CD8-positive, alpha-beta T cell (primary cell): ENCODE measurements at regions of chr2 and their contacts with region 1.

Region 1: GRCh38 chr2:64644177-64645004 is 9.3 kb downstream of the SERTAD2 start:
- DNase-seq: peak in 7 of 9 experiments; percentile 45 to 80 (median 66)
- ATAC-seq: peak; percentile 74
- H3K4me3 ChIP-seq: peak overlapping the region; percentile 42 to 47
- H3K4me3 Mint-ChIP-seq: peak overlapping the region; percentile 89
- H3K27ac ChIP-seq: peak overlapping the region; percentile 50 to 82
- H3K27ac Mint-ChIP-seq: peak overlapping the region; percentile 93
- H3K4me1 ChIP-seq: peaks cover 71% of the 10 kb centered on the region
- H3K4me1 Mint-ChIP-seq: peaks cover 94% of the 10 kb centered on the region
- H3K27me3 ChIP-seq: no peaks in the 10 kb centered on the region
- H3K27me3 Mint-ChIP-seq: no peaks in the 10 kb centered on the region
- CTCF ChIP-seq: no peak

Region 2: DNA sequence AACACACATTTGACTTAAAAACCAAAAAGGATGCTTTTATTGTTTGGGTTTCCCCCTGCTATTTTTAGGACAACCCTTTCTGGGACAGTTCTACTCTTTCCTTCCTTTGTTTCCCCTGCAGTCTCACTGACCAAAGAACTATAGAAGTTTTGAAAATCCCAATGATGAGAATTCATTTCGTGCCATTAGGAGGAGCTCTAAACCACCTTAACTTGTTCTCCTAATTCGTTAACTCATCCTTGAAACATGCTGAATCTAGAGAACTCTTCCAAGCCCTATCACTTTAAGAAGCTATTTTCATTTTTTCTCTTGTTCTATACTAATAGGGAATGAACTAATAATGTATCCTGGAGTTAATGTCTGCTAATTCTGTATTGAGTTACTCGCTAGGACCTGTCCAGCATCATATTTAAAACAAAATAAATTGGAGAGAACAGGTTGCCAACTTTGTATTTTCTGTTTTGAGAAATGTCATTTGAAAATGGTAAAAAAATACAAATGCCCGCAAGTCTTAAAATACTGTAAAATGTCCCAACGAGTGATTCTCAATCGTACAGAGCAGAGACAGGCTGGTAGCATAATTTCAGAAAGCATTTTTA is 57.4 kb before region 1 on chr2:
- CTCF ChIA-PET with region 1: interaction called, 12 read pairs
- POLR2A ChIA-PET with region 1: interaction called, 3 read pairs
- intact Hi-C with region 1: loop called (anchors 2 kb)
- DNase-seq: peak in 2 of 9 experiments; percentile 57 to 70
- ATAC-seq: peak; percentile 75
- H3K4me3 ChIP-seq: no peak overlapping the region
- H3K4me3 Mint-ChIP-seq: no peak overlapping the region
- H3K27ac ChIP-seq: no peak overlapping the region
- H3K27ac Mint-ChIP-seq: no peak overlapping the region
- H3K4me1 ChIP-seq: no peaks in the 10 kb centered on the region
- H3K4me1 Mint-ChIP-seq: no peaks in the 10 kb centered on the region
- H3K27me3 ChIP-seq: no peaks in the 10 kb centered on the region
- H3K27me3 Mint-ChIP-seq: no peaks in the 10 kb centered on the region
- CTCF ChIP-seq: peak; percentile 87

Region 3: DNA sequence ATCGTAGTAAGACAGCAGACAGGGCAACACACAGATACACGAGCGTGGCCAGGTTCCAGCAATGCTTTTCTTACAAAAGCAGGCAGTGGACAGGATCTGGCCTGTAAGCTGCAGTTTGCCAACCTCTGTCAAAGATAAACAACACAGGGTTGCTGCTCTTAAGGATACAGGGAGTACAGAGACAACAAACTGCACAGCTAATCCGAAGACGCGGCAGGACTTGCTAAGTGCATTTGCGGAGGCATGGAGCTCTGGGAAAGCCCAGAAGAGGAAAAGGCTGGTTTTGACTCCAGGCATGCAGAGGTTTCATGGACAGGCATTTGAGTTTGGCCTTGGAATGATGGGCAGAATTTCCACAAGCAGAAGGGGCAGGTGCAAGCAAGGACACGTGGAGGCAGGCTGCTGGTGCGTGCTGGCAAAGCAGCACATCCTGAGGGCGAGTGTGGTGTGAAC is 15.0 kb before region 1 on chr2:
- CTCF ChIA-PET with region 1: interaction called, 92 read pairs
- POLR2A ChIA-PET with region 1: interaction called, 4 read pairs
- intact Hi-C with region 1: loop called in 1 of 2 experiments (anchors 1 kb)
- DNase-seq: no peak
- ATAC-seq: no peak
- H3K4me3 ChIP-seq: no peak overlapping the region
- H3K4me3 Mint-ChIP-seq: no peak overlapping the region
- H3K27ac ChIP-seq: no peak overlapping the region
- H3K27ac Mint-ChIP-seq: no peak overlapping the region
- H3K4me1 ChIP-seq: no peaks in the 10 kb centered on the region
- H3K4me1 Mint-ChIP-seq: peaks cover 9% of the 10 kb centered on the region
- H3K27me3 ChIP-seq: no peaks in the 10 kb centered on the region
- H3K27me3 Mint-ChIP-seq: no peaks in the 10 kb centered on the region
- CTCF ChIP-seq: no peak

Region 4: GRCh38 chr2:64698668-64699444 is 54.5 kb after region 1 on chr2:
- CTCF ChIA-PET with region 1: interaction called, 5 read pairs
- POLR2A ChIA-PET with region 1: interaction called, 3 read pairs
- intact Hi-C with region 1: loop called in 1 of 2 experiments (anchors 5 kb)
- DNase-seq: peak in 2 of 9 experiments; percentile 15 to 53
- ATAC-seq: peak; percentile 78
- H3K4me3 ChIP-seq: no peak overlapping the region
- H3K4me3 Mint-ChIP-seq: no peak overlapping the region
- H3K27ac ChIP-seq: no peak overlapping the region
- H3K27ac Mint-ChIP-seq: no peak overlapping the region
- H3K4me1 ChIP-seq: peaks cover 8% of the 10 kb centered on the region
- H3K4me1 Mint-ChIP-seq: peaks cover 37% of the 10 kb centered on the region
- H3K27me3 ChIP-seq: no peaks in the 10 kb centered on the region
- H3K27me3 Mint-ChIP-seq: no peaks in the 10 kb centered on the region
- CTCF ChIP-seq: no peak

Region 5: GRCh38 chr2:64767670-64768468 is 123.5 kb after region 1 on chr2:
- CTCF ChIA-PET with region 1: interaction called, 22 read pairs
- POLR2A ChIA-PET with region 1: interaction called, 9 read pairs
- intact Hi-C with region 1: loop called in 1 of 2 experiments (anchors 2 kb)
- DNase-seq: peak; percentile 45 to 90 (median 74)
- ATAC-seq: peak; percentile 74
- H3K4me3 ChIP-seq: peak overlapping the region; percentile 66 to 68
- H3K4me3 Mint-ChIP-seq: peak overlapping the region; percentile 92
- H3K27ac ChIP-seq: peak overlapping the region; percentile 61 to 88
- H3K27ac Mint-ChIP-seq: peak overlapping the region; percentile 93
- H3K4me1 ChIP-seq: peaks cover 11% of the 10 kb centered on the region
- H3K4me1 Mint-ChIP-seq: peaks cover 16% of the 10 kb centered on the region
- H3K27me3 ChIP-seq: no peaks in the 10 kb centered on the region
- H3K27me3 Mint-ChIP-seq: no peaks in the 10 kb centered on the region
- CTCF ChIP-seq: no peak

Region 6: DNA sequence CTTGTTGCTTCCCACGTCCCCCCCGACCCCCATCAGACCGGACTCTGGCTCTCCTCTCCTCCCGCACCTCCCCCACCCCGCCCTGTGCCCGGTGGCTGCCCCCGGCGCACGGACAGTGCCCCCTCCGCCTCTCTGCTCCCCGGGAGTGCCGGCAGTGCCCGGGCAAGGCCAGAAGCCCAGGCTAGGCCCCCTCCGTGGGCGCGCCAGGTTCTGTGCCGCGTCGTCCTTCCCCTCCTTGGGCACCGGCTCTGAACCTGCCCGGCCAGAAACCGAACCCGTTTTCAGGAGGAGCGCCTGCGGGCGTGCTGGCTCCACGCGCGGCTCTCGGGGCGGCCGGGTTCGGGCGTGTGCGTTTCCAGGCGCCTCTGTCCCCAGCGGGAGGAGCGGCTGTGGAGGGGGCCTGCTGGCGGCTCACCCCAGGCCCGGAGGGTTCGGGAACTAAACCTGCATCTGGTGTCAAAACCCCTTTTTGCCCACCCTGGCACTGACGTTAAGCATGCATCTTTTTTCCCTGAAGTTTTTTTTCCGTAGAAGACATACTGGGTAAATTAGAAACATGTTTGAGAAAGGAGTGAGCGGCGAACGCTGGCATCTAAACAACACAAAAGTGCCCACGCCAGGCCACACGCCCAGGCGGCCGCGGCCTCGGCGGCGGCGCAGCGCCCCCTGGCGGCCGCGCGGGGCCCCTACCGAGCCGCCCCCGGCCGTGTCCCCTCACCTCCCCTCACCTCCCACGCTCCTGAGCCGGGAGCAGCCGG is 220.9 kb after region 1 on chr2:
- CTCF ChIA-PET with region 1: interaction called, 28 read pairs
- POLR2A ChIA-PET with region 1: interaction called, 3 read pairs
- intact Hi-C with region 1: loop called (anchors 1 kb)
- DNase-seq: peak; percentile 39 to 84 (median 55)
- ATAC-seq: peak; percentile 91
- H3K4me3 ChIP-seq: peak overlapping the region; percentile 61 to 76
- H3K4me3 Mint-ChIP-seq: peak overlapping the region; percentile 81
- H3K27ac ChIP-seq: no peak overlapping the region
- H3K27ac Mint-ChIP-seq: no peak overlapping the region
- H3K4me1 ChIP-seq: peaks cover 13% of the 10 kb centered on the region
- H3K4me1 Mint-ChIP-seq: no peaks in the 10 kb centered on the region
- H3K27me3 ChIP-seq: peaks cover 0 to 2% of the 10 kb centered on the region in 2 experiments
- H3K27me3 Mint-ChIP-seq: peaks cover 4% of the 10 kb centered on the region
- CTCF ChIP-seq: peak; percentile 80